Breast epithelium (tissue), 4 donors: ENCODE measurements at regions of chr1 and their contacts with region 1.

Region 1: DNA sequence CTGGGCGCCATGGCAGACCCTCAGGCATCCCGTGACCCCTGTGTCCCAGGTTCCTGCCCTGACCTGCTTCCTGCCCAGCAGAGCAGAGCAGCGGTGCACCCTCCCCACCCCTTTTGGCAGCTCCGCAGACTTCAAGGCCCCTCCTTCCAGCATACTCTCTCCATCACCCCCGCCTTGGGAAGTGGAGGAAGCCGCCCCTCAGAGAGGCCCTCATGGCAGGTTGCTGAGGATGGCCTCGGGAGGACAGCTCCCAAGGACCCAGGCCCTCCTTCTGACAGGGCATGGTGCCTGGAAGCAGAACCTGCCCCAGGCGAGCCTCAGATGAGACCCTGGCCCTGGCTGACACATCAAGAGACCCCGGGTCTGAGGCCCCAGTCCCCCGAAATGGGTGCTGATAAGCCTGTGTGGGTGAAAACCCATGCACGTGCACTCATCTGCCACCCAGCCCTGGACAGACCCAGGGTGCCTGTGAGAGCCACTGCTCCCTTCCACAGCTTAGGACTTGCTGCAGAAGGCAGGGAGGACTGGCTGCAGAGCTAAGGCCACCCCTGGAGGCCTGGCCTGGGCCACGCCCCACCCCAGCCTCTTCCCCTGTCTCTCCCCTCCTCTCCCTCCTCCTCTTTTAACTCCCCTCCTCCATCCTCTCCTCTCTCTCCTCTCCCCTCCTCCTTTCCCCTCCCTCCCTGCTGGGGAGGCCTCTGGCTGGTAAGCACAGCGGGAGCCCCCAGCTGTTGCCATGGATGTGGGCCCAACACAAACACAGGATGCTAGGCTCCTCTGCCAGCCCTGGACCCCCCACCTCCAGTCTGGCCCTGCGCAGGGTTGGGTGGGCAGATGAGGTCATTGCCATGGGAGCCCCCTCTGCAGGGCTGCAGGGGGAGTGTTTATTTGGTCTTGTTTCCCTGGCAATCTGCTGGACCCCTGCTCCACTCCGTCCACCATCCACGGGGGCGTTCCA is 33.7 kb downstream of the WNT9A start:
- DNase-seq: no peak
- H3K4me3 ChIP-seq: no peak overlapping the region
- H3K27ac ChIP-seq: no peak overlapping the region
- H3K4me1 ChIP-seq: no peaks in the 10 kb centered on the region
- H3K27me3 ChIP-seq: no peaks in the 10 kb centered on the region
- CTCF ChIP-seq: no peak
- POLR2A ChIP-seq: no peak

Region 2: GRCh38 chr1:227945891-227946623 is 32.0 kb after region 1 on chr1:
- intact Hi-C with region 1: no loop called
- DNase-seq: peak; percentile 55 to 82
- H3K4me3 ChIP-seq: peak overlapping the region; percentile 51 to 70 (median 61)
- H3K27ac ChIP-seq: peak overlapping the region; percentile 78
- H3K4me1 ChIP-seq: peaks cover 7 to 11% of the 10 kb centered on the region in 2 donors
- H3K27me3 ChIP-seq: no peaks in the 10 kb centered on the region
- CTCF ChIP-seq: no peak
- POLR2A ChIP-seq: no peak

Region 3: DNA sequence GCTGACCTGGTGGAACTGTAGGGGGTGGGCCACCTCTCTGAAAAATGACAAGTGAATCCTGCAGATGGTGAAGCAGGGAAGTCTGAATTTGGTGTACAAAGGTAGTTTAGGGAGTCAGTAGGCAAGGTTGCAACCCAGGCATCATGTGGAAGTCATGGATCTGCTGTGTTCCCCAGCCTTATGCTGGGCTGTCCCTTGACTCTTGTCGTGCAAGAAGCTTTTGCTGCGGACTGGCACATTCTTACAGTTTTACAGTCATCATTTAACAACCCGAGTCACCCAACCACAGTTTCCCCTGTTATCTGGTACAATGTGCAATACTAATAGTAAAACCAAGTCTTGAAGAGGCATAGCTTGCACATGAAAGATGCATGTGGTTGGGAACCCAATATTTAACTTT is 834.4 kb after region 1 on chr1:
- intact Hi-C with region 1: loop called (anchors 10 kb)
- DNase-seq: no peak
- H3K4me3 ChIP-seq: no peak overlapping the region
- H3K27ac ChIP-seq: no peak overlapping the region
- H3K4me1 ChIP-seq: no peaks in the 10 kb centered on the region
- H3K27me3 ChIP-seq: no peaks in the 10 kb centered on the region
- CTCF ChIP-seq: no peak
- POLR2A ChIP-seq: no peak